Panc1 (cell line): ENCODE measurements at regions of chr10 and their contacts with region 1.

Region 1: GRCh38 chr10:77974396-77975074 is 48.0 kb upstream of the DLG5 start:
- DNase-seq: no peak
- ATAC-seq: peak; percentile 72
- H3K4me3 ChIP-seq: no peak overlapping the region
- H3K27ac ChIP-seq: no peak overlapping the region
- H3K4me1 ChIP-seq: 0 out of 2 replicates have a peak, but pooled peaks cover 7% of the 10 kb centered on the region
- H3K27me3 ChIP-seq: no peaks in the 10 kb centered on the region
- CTCF ChIP-seq: peak; percentile 83; the same call in 1 of the 2 replicates

Region 2: GRCh38 chr10:77774940-77775391 is 199.6 kb before region 1 on chr10:
- CTCF ChIA-PET with region 1: no interaction called
- POLR2A ChIA-PET with region 1: no interaction called
- in situ Hi-C with region 1: no loop called
- intact Hi-C with region 1: no loop called
- DNase-seq: no peak
- ATAC-seq: no peak
- H3K4me3 ChIP-seq: no peak overlapping the region
- H3K27ac ChIP-seq: no peak overlapping the region
- H3K4me1 ChIP-seq: no peaks in the 10 kb centered on the region
- H3K27me3 ChIP-seq: no peaks in the 10 kb centered on the region
- CTCF ChIP-seq: no peak

Region 3: DNA sequence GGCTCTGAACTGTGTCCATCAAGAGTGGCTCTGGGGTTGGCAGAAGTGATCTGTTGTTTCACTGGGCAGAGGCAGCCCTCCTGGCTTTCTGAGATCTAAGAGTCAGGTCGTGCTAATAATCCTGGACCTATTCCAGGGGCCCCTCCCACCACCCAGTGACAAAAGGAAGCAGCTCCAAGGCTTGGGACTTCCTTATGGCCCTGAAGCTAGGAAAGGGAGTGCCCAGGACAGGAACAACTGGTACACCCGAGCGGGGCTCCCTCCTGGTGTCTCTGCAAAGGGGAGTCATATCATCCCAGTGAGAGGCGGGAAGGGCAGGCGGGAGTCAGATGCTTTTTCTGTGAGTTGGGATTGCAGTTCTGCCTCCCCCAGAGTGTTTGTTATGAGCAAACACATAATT is 91.5 kb after region 1 on chr10:
- CTCF ChIA-PET with region 1: no interaction called
- POLR2A ChIA-PET with region 1: no interaction called
- in situ Hi-C with region 1: no loop called
- intact Hi-C with region 1: no loop called
- DNase-seq: no peak
- ATAC-seq: no peak
- H3K4me3 ChIP-seq: no peak overlapping the region
- H3K27ac ChIP-seq: no peak overlapping the region
- H3K4me1 ChIP-seq: no peaks in the 10 kb centered on the region
- H3K27me3 ChIP-seq: no peaks in the 10 kb centered on the region
- CTCF ChIP-seq: no peak

Region 4: GRCh38 chr10:78231939-78232338 is 257.4 kb after region 1 on chr10:
- CTCF ChIA-PET with region 1: interaction called, 12 read pairs
- POLR2A ChIA-PET with region 1: no interaction called
- in situ Hi-C with region 1: no loop called
- intact Hi-C with region 1: no loop called
- DNase-seq: no peak
- ATAC-seq: peak; percentile 35; the same call in 1 of the 2 replicates
- H3K4me3 ChIP-seq: no peak overlapping the region
- H3K27ac ChIP-seq: no peak overlapping the region
- H3K4me1 ChIP-seq: no peaks in the 10 kb centered on the region
- H3K27me3 ChIP-seq: no peaks in the 10 kb centered on the region; the same call in 1 of the 2 replicates
- CTCF ChIP-seq: no peak; the same call in 1 of the 2 replicates